Heart left ventricle (tissue), 16 donors: ENCODE measurements at regions of chr12 and their contacts with region 1.

Region 1: DNA sequence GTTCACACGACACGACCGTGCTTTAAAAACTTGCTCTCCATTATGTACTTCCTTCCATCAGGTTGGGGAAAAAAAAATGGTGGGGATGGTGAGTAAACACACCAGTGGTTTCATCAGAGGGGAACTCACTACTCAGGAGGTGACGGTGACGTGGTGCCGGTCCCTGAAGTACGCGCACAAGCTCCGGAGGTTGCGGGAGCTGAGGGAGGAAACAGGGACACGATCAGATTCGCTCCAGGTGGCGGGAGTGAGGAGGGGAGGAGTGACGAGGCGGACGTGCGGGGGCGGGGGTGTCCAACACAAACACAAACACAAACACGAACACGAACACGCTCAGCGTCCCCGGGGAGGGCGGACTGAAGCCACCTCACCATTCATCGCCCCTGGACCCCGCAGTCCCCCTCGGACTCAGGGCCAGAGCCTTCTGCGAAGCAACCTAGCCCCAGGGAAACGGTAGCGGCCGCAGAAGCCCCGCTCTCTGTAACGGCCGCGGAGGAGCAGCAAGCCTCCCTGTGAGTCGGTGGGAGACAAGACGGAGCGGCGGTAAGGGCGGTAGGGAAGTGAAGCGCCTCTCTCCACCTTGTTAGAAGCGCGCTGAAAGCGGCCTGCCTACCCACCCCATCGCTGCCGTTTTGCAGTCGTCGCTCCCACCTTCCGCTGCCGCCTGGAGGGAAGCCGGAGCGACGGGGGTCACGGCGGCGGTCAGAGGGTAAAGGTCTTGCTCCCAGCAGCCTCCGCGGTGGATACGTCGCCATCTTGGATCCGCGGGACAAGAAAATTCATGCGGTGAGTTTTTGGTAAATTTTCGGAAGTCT is at the start of gene CNOT2:
- DNase-seq: peak; percentile 91 to 95 (median 92)
- ATAC-seq: peak; percentile 96 to 98 (median 98)
- H3K4me3 ChIP-seq: peak within 1 kb of the TSS; percentile 78 to 97 (median 89)
- H3K27ac ChIP-seq: peak within 1 kb of the TSS; percentile 85 to 99 (median 96)
- H3K4me1 ChIP-seq: peaks cover 0 to 62% (median 42%) of the 10 kb centered on the region in 12 donors
- H3K27me3 ChIP-seq: no peaks in the 10 kb centered on the region
- CTCF ChIP-seq: peak in 1 of 12 donors; percentile 15
- POLR2A ChIP-seq: peak in 1 of 2 donors; percentile 37
- total RNA-seq, gene CNOT2: 32.7 to 63.7 (median 37.0) TPM

Region 2: GRCh38 chr12:70277973-70278372 is 35.1 kb after region 1 on chr12:
- intact Hi-C with region 1: no loop called
- DNase-seq: no peak
- ATAC-seq: no peak
- H3K4me3 ChIP-seq: no peak overlapping the region
- H3K27ac ChIP-seq: no peak overlapping the region
- H3K4me1 ChIP-seq: peaks cover 0 to 14% (median 0%) of the 10 kb centered on the region in 12 donors
- H3K27me3 ChIP-seq: no peaks in the 10 kb centered on the region
- CTCF ChIP-seq: no peak
- POLR2A ChIP-seq: no peak

Region 3: GRCh38 chr12:70317781-70318180 is 74.9 kb after region 1 on chr12:
- intact Hi-C with region 1: loop called in 1 of 10 experiments (anchors 10 kb)
- DNase-seq: no peak
- ATAC-seq: no peak
- H3K4me3 ChIP-seq: no peak overlapping the region
- H3K27ac ChIP-seq: peak overlapping the region in 1 of 12 donors; percentile 46
- H3K4me1 ChIP-seq: peaks cover 0 to 62% (median 0%) of the 10 kb centered on the region in 12 donors
- H3K27me3 ChIP-seq: no peaks in the 10 kb centered on the region
- CTCF ChIP-seq: no peak
- POLR2A ChIP-seq: no peak

Region 4: DNA sequence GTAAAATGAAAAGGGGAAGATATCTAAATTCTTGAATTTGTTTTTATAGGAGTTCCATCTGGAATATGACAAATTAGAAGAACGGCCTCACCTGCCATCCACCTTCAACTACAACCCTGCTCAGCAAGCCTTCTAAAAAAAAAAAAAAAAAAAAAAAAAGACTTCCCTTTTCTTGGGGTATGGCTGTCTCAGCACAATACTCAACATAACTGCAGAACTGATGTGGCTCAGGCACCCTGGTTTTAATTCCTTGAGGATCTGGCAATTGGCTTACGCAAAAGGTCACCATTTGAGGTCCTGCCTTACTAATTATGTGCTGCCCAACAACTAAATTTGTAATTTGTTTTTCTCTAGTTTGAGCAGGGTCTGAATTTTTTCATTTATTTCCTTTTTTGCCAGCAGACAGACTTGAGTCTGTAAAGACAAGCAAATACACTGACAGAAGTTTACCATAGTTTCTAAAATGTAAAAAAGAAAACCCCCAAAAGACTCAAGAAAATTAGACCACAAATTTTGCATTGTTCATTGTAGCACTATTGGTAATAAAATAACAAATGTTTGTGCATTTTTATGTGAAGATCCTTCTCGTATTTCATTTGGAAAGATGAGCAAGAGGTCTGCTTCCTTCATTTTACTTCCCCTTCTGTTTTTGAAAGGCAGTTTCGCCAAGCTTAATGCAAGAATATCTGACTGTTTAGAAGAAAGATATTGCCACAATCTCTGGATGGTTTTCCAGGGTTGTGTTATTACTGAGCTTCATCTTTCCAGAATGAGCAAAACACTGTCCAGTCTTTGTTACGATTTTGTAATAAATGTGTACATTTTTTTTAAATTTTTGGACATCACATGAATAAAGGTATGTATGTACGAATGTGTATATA is 111.1 kb after region 1 on chr12:
- intact Hi-C with region 1: loop called in 1 of 10 experiments (anchors 10 kb)
- DNase-seq: no peak
- ATAC-seq: peak in 1 of 4 donors; percentile 36
- H3K4me3 ChIP-seq: no peak overlapping the region
- H3K27ac ChIP-seq: peak overlapping the region in 1 of 12 donors; percentile 67
- H3K4me1 ChIP-seq: peaks cover 0 to 13% (median 0%) of the 10 kb centered on the region in 12 donors
- H3K27me3 ChIP-seq: no peaks in the 10 kb centered on the region
- CTCF ChIP-seq: no peak
- POLR2A ChIP-seq: no peak

Region 5: DNA sequence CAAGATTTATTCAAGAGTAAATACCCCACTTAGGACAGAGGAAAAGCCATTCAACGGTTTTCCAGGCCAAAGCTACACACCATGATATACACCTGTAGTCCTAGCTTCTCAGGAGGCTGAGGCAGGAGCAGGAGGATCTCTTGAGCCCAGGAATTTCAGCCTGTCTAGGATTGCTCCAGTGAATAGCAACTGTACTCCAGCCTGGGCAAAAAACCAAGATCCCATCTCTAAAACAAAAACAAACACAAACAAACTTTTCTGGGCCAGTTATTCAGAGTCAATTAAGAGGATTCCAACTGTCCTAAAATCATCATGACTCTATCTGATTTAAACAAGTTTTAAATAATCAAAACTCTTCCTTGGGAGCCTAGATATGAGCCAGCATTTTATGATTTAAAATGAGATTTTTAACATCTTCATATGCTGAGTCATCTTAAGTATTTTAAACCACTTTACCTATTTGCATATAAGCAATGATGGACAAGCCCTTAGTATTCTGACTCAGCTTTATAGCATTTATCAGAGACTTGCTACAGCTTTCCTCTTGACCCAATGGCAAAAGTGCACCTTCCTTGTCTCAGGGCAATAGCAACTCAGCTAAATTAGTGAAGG is 200.3 kb after region 1 on chr12:
- intact Hi-C with region 1: no loop called
- DNase-seq: no peak
- ATAC-seq: no peak
- H3K4me3 ChIP-seq: no peak overlapping the region
- H3K27ac ChIP-seq: no peak overlapping the region
- H3K4me1 ChIP-seq: no peaks in the 10 kb centered on the region
- H3K27me3 ChIP-seq: no peaks in the 10 kb centered on the region
- CTCF ChIP-seq: no peak
- POLR2A ChIP-seq: no peak

Region 6: DNA sequence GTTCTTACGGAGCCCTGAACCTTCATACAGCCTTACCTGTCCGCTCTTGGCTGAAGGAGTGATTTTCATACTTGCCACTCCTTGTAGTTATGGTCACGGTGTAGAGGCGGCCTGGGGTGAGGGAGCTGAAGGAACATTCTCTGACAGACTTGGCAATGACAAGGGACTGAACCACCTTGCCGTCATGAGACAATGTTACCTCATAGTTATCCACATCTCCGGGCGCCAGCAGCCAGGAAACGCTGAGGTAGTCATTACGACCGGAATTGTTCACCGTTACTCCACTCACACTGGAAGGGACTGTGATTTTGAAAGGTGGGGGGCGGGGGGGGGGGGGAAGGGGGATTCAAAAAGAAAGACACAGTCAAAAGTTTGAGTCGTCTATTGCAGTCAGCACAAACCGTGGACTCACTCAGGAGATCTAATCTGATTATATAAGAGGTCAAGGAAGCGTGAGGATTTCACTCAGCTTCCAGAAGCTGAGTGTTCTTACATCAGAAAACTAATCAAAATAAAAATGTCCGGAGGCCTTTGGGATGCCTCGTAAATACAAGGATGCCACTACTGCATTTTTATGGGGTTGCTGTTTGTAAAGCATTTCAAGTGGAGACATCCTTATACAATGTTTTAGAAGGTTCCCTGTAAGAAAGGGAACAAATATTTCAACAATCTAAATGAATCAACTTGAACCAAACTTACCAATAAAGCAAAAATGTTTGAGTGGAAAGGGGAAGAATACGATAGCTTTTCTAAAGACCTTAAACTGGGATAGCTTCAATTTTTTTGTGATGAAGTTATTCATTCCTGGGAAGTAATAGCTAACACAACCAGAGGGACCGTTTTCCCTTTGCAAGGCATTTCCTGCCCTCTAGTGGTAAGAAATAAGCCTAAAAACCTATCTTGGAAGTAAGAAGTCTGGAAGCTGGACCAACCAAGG is 333.7 kb after region 1 on chr12:
- intact Hi-C with region 1: loop called in 1 of 10 experiments (anchors 10 kb)
- DNase-seq: peak in 1 of 5 donors; percentile 9
- ATAC-seq: peak in 3 of 4 donors; percentile 73 to 86 (median 82)
- H3K4me3 ChIP-seq: no peak overlapping the region
- H3K27ac ChIP-seq: peak overlapping the region in 2 of 12 donors; percentile 5 to 8
- H3K4me1 ChIP-seq: peaks cover 0 to 9% (median 0%) of the 10 kb centered on the region in 12 donors
- H3K27me3 ChIP-seq: no peaks in the 10 kb centered on the region
- CTCF ChIP-seq: peak; percentile 61 to 85 (median 82)
- POLR2A ChIP-seq: no peak

Region 7: GRCh38 chr12:70619471-70620152 is 376.7 kb after region 1 on chr12:
- intact Hi-C with region 1: no loop called
- DNase-seq: no peak
- ATAC-seq: no peak
- H3K4me3 ChIP-seq: no peak overlapping the region
- H3K27ac ChIP-seq: peak overlapping the region in 1 of 12 donors; percentile 31
- H3K4me1 ChIP-seq: peaks cover 0 to 24% (median 4%) of the 10 kb centered on the region in 12 donors
- H3K27me3 ChIP-seq: no peaks in the 10 kb centered on the region
- CTCF ChIP-seq: no peak
- POLR2A ChIP-seq: no peak

Region 8: DNA sequence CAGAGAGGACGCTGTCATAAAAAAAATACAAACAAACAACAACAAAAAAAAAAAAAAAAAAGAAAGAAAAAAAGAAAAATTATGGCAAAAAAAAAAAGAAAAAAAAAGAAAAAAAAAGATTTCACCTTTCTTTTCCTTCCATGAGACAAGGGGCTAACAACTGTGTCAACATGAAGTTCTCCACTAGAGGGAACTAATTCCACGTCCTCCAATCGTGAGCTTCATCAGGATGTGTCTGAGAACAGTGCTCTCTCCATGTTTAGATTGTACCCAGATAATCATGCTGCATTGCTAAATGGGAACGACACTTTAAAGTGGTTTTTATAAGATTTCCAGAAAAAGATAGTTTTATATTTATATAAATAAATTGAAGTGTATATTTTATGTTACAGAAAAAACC is 490.5 kb after region 1 on chr12:
- intact Hi-C with region 1: loop called in 2 of 10 experiments (anchors 5 to 10 kb)
- DNase-seq: peak in 1 of 5 donors; percentile 14
- ATAC-seq: peak in 3 of 4 donors; percentile 50 to 72 (median 70)
- H3K4me3 ChIP-seq: no peak overlapping the region
- H3K27ac ChIP-seq: no peak overlapping the region
- H3K4me1 ChIP-seq: no peaks in the 10 kb centered on the region
- H3K27me3 ChIP-seq: peaks cover 0 to 2% (median 0%) of the 10 kb centered on the region in 9 donors
- CTCF ChIP-seq: peak; percentile 55 to 79 (median 66)
- POLR2A ChIP-seq: no peak